Activated CD4-positive, alpha-beta T cell treated with anti-CD3 and anti-CD28 coated beads, Interleukin-2, amount 10 ng/mL, durations not matched to agents 7 days and 5 days (primary cell): ENCODE measurements at regions of chr2 and their contacts with region 1.

Region 1: DNA sequence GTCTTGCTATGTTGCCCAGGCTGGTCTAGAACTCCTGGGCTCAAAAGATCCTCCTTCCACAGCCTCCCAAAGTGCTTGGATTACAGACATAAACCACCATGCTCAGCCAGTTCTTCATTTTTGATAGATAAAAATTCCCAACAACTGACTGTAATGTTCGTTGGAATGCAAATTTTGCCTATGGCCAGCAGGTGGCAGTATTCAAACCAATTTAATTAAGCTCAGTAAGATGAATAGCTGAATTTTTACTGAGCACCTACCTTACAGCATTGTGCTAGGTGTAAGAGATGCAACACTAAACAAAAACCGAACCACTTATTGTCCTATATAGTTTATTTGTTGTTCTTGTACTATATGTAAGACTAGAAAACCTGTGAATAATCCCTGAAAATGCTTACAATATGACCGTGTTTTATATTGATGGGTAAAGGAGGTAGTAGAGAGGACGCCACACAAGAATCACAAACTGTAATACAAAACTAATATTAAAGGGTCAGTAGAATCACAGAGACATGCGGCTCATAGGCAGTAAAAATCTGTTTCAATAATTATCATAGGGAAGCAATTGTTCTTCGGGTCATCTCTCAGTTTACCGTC is 8.2 kb upstream of the TMEM182 start:
- DNase-seq: peak; percentile 47
- H3K4me3 Mint-ChIP-seq: no peak overlapping the region
- H3K27ac Mint-ChIP-seq: no peak overlapping the region
- H3K4me1 Mint-ChIP-seq: no peaks in the 10 kb centered on the region
- H3K27me3 Mint-ChIP-seq: no peaks in the 10 kb centered on the region

Region 2: DNA sequence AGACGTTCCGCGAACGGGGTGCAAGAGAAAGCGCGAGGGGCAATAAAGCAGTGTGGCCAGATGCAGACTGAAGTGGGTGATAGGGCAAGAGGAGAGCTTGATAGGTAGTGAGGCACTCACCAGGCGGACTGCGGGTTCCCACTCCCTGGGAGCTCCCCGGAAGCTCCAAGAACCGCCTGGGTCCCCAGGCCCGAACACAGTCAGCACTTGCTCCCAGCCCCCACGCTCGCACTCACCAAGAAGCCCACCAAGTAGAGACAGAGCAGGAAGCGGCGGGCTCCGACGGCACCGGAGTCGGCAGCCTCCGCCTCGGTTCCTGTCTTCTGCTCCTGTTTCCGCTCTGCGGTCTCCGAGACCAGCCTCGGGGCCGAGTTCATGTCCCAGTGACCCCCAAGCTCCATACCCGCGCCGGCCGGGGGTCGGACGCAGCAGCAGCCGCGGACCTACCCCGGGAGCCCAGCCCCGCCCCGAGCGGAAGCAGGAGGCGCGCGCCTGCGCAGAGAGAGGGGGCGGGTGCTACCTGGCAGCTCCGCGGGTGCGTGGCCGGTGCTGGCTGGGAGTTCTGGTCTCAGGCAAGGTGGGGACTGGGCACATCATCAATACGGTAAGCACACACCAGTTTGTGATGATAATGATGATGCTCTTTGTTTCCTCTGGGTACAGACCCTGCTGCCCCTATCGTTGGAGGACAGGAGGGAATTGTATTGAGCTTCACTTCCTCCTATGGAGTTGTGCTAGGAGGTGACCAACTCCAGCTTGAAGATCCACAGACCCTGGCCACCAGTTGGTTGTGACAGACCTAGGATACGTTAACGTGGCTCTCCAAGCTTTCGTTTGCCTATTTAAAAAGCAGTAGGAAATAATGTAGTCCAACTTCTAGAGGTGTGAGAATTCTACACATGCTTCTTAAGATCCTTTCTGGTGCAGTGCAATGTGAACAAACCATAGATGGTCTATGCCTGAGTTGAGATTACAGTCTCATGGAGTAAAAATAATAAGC is 17.0 kb before region 1 on chr2:
- CTCF ChIA-PET with region 1: interaction called, 11 read pairs
- POLR2A ChIA-PET with region 1: no interaction called
- DNase-seq: peak; percentile 85
- H3K4me3 Mint-ChIP-seq: peak overlapping the region; percentile 89
- H3K27ac Mint-ChIP-seq: peak overlapping the region; percentile 92
- H3K4me1 Mint-ChIP-seq: peaks cover 33% of the 10 kb centered on the region
- H3K27me3 Mint-ChIP-seq: no peaks in the 10 kb centered on the region

Region 3: GRCh38 chr2:104444392-104444791 is 1690.7 kb after region 1 on chr2:
- CTCF ChIA-PET with region 1: no interaction called
- POLR2A ChIA-PET with region 1: interaction called, 10 read pairs
- DNase-seq: no peak
- H3K4me3 Mint-ChIP-seq: no peak overlapping the region
- H3K27ac Mint-ChIP-seq: no peak overlapping the region
- H3K4me1 Mint-ChIP-seq: peaks cover 17% of the 10 kb centered on the region
- H3K27me3 Mint-ChIP-seq: peaks cover 5% of the 10 kb centered on the region